ENCODE measurements at regions of chr9 and their contacts with region 1.

Region 1: DNA sequence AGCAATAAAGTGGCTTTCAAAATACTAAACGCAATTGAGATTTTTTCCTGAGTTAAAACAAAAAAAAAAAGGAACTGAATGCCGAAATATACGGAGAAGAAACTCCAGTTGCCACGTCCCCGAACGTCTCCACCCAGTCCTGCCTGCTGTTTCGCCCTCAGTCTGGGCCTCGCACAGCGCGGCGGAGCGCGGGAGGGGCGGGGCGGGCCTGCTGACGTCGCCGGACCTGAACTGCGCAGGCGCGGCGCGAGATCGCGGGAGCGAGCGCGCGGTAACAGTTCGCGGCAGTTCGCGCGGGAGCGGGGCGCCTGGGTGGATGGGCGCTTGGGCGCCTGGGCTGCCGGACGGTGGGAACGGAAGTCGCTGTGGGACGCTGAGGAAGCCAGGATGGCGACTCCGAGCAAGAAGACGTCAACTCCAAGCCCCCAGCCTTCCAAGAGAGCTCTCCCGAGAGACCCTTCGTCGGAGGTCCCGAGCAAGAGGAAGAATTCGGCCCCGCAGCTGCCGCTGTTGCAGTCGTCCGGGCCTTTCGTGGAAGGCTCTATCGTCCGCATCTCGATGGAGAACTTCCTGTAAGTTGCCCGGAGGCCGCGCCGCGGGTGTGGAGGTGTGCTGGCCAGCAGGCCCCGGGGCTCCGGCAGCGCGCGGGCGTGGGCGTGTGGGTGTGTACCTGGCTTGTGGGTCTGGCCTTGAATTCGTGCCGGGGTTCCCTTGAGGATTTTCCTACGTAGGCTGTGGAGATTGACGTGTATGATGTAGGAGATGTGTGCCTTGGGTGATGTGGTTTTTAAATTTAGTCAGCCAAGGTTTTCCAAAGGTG is at the start of gene SMC5:
- DNase-seq: peak; percentile 85
- H3K4me3 Mint-ChIP-seq: peak within 1 kb of the TSS; percentile 92
- H3K27ac Mint-ChIP-seq: peak within 1 kb of the TSS; percentile 96
- H3K4me1 Mint-ChIP-seq: peaks cover 61% of the 10 kb centered on the region
- H3K27me3 Mint-ChIP-seq: no peaks in the 10 kb centered on the region
- total RNA-seq, gene SMC5: 30.4 to 31.2 TPM

Region 2: DNA sequence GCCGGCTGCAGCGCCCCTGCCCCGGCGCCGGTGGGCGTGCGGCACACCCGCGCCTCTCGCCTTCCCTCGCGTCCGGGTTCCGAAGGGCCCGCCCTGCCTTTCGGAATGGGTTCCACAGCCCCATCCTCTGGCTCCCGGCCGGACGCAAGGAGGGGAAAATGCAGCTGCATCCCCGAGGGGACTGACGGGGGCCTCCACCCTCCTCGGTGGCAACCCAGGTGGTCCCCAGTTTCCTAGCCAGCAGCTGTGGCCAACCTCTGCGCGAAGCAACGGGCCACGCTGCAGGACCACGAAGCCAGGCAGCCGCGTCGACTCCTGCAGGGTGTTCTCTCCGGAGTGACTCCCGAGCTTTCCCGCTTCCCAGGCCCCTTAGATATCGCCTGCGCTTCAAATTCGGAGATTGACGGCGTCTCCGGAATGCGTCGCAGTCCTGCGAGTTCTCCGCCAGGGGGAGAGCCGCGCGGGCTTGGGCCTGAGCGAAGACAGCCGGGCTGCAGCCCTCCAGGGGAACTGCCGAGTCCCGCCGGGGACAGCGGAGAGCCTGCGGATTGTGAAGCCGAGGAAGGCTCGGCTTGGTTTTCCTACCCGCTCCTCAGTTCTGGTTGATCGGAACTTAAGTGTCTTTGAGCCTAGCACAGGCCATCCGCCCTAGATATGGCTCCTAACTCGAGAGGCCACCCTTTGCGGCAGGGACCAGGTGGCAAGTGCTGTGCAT is 586.1 kb before region 1 on chr9:
- CTCF ChIA-PET with region 1: no interaction called
- intact Hi-C with region 1: loop called (anchors 10 kb)
- DNase-seq: peak; percentile 81
- H3K4me3 Mint-ChIP-seq: peak overlapping the region; percentile 72
- H3K27ac Mint-ChIP-seq: no peak overlapping the region
- H3K4me1 Mint-ChIP-seq: peaks cover 9% of the 10 kb centered on the region
- H3K27me3 Mint-ChIP-seq: peaks cover 12% of the 10 kb centered on the region

Region 3: GRCh38 chr9:69834591-69835184 is 424.2 kb before region 1 on chr9:
- CTCF ChIA-PET with region 1: no interaction called
- intact Hi-C with region 1: loop called (anchors 10 kb)
- DNase-seq: no peak
- H3K4me3 Mint-ChIP-seq: no peak overlapping the region
- H3K27ac Mint-ChIP-seq: no peak overlapping the region
- H3K4me1 Mint-ChIP-seq: peaks cover 27% of the 10 kb centered on the region
- H3K27me3 Mint-ChIP-seq: peaks cover 2% of the 10 kb centered on the region

Region 4: DNA sequence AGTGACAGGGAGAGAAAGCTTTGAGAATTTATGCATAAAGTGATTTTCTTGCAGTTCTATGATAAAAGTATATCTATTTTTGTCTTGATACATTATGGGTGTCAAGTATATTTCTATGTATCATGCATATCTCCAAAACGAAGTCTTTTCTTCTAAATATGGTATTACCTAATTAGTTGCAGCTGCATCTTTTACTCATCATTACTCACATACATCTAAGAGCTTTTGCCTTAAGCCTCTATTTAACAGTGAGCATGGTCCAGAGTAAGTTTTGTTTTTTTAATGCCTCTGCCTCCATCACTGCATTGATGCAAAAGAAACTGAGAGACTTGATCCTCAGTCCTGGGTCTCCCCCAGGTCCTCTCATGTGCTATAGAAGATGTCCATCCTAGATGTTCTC is 40.1 kb before region 1 on chr9:
- CTCF ChIA-PET with region 1: no interaction called
- intact Hi-C with region 1: no loop called
- DNase-seq: no peak
- H3K4me3 Mint-ChIP-seq: no peak overlapping the region
- H3K27ac Mint-ChIP-seq: no peak overlapping the region
- H3K4me1 Mint-ChIP-seq: no peaks in the 10 kb centered on the region
- H3K27me3 Mint-ChIP-seq: no peaks in the 10 kb centered on the region

Region 5: DNA sequence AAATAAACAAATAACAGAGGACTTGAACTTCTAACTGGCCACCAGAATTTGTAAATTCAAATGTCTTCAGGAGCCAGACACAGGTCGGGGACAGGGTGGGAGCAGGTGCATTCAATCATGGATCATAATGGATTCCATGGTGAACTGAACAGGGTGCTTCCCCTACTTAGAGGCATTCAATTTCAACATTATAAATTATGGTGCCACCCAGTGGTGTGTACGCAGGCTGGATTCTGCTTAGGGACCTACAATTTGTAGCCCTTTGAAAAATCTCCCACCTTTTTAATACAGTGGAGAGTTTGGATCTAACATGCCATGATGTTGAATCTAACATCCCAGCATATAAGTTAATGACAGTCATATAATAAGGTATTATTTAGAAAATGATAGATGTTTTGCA is 133.3 kb after region 1 on chr9:
- CTCF ChIA-PET with region 1: no interaction called
- intact Hi-C with region 1: loop called (anchors 5 kb)
- DNase-seq: peak; percentile 24
- H3K4me3 Mint-ChIP-seq: no peak overlapping the region
- H3K27ac Mint-ChIP-seq: peak overlapping the region; percentile 32
- H3K4me1 Mint-ChIP-seq: peaks cover 78% of the 10 kb centered on the region
- H3K27me3 Mint-ChIP-seq: no peaks in the 10 kb centered on the region

Region 6: GRCh38 chr9:70413798-70414775 is 155.2 kb after region 1 on chr9 and contains the start of gene KLF9:
- CTCF ChIA-PET with region 1: no interaction called
- intact Hi-C with region 1: loop called (anchors 1 kb)
- DNase-seq: peak; percentile 96
- H3K4me3 Mint-ChIP-seq: peak within 1 kb of the TSS; percentile 100
- H3K27ac Mint-ChIP-seq: peak within 1 kb of the TSS; percentile 100
- H3K4me1 Mint-ChIP-seq: peaks cover 39% of the 10 kb centered on the region
- H3K27me3 Mint-ChIP-seq: no peaks in the 10 kb centered on the region
- total RNA-seq, gene KLF9: 44.2 to 45.0 TPM

Region 7: GRCh38 chr9:70519912-70520724 is 261.2 kb after region 1 on chr9:
- CTCF ChIA-PET with region 1: no interaction called
- intact Hi-C with region 1: loop called (anchors 2 kb)
- DNase-seq: peak; percentile 49
- H3K4me3 Mint-ChIP-seq: peak overlapping the region; percentile 53
- H3K27ac Mint-ChIP-seq: peak overlapping the region; percentile 82
- H3K4me1 Mint-ChIP-seq: peaks cover 32% of the 10 kb centered on the region
- H3K27me3 Mint-ChIP-seq: no peaks in the 10 kb centered on the region